ENCODE measurements at regions of chr22 and their contacts with region 1.

Region 1: DNA sequence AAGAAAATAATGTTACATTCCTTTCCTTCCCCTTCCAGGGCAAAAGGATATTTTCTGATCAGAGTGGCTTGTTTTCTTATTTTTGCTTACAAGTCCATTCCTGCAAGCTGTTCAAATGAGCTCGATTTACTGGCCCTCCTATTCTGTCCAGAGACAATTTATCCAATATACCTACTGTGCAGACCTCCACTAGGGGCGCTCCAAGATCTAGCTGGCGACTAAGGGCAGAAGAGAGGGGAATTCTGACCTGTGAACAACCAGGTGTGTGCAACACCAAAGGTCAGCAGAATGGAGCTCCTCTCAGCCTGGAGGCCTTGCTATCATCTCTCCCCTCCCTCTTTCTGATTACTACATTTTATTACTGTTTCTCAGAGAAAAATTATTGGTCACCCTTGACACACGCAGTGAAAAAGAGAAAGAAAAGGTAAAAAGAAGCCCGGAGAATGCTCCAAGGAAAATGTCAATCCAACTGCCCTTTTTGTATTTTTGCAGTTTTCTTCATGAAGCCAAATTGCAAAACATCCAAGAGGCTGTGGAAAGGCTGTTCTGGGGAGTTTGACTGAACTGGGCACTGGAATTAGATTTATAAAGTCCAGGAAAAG is 3.2 kb downstream of the SEZ6L start:
- DNase-seq: peak in 1 of 2 experiments; percentile 72
- H3K4me3 ChIP-seq: no peak overlapping the region
- H3K27ac ChIP-seq: no peak overlapping the region
- H3K4me1 ChIP-seq: peaks cover 4 to 21% (median 10%) of the 10 kb centered on the region in 4 experiments
- H3K27me3 ChIP-seq: peaks cover 19 to 40% (median 36%) of the 10 kb centered on the region in 4 experiments
- CTCF ChIP-seq: peak; percentile 53 to 86 (median 79)
- EP300 ChIP-seq: no peak
- POLR2A ChIP-seq: no peak
- RAD21 ChIP-seq: peak; percentile 74 to 83

Region 2: DNA sequence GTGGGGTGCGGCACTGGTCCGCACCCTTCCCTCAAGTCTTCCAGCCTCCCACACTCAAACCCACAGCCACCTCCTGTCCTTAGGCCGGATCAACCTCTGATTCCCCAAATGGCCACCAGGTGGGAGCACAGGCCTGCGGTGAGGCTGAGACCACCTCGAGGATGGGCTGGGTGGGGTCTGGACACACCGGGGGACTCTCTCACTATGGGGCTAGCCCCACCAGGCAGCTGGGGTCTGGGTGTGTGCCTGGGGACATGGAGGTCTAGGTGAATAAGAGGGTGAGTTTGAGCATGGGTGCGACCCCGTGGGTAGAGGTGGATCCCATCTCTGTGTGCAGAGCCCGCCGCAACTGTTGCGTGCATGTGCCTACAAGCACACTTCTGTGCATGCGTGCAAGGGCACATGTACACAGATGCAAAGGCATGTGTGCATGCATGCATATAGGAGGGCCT is 397.9 kb before region 1 on chr22:
- CTCF ChIA-PET with region 1: interaction called, 14 read pairs
- POLR2A ChIA-PET with region 1: no interaction called
- DNase-seq: peak in 1 of 2 experiments; percentile 86
- H3K4me3 ChIP-seq: no peak overlapping the region
- H3K27ac ChIP-seq: no peak overlapping the region
- H3K4me1 ChIP-seq: no peaks in the 10 kb centered on the region
- H3K27me3 ChIP-seq: no peaks in the 10 kb centered on the region
- CTCF ChIP-seq: peak; percentile 90 to 93 (median 90)
- EP300 ChIP-seq: no peak
- POLR2A ChIP-seq: no peak
- RAD21 ChIP-seq: peak; percentile 97

Region 3: GRCh38 chr22:26115266-26115665 is 57.2 kb before region 1 on chr22:
- CTCF ChIA-PET with region 1: no interaction called
- POLR2A ChIA-PET with region 1: no interaction called
- DNase-seq: no peak
- H3K4me3 ChIP-seq: no peak overlapping the region
- H3K27ac ChIP-seq: no peak overlapping the region
- H3K4me1 ChIP-seq: no peaks in the 10 kb centered on the region
- H3K27me3 ChIP-seq: no peaks in the 10 kb centered on the region
- CTCF ChIP-seq: no peak
- EP300 ChIP-seq: no peak
- POLR2A ChIP-seq: no peak
- RAD21 ChIP-seq: no peak

Region 4: GRCh38 chr22:26134654-26135330 is 37.7 kb before region 1 on chr22:
- CTCF ChIA-PET with region 1: interaction called, 16 read pairs
- POLR2A ChIA-PET with region 1: no interaction called
- DNase-seq: peak in 1 of 2 experiments; percentile 58
- H3K4me3 ChIP-seq: no peak overlapping the region
- H3K27ac ChIP-seq: no peak overlapping the region
- H3K4me1 ChIP-seq: peaks cover 3 to 8% (median 5%) of the 10 kb centered on the region in 4 experiments; a peak in 5 of 7 replicates
- H3K27me3 ChIP-seq: no peaks in the 10 kb centered on the region
- CTCF ChIP-seq: peak; percentile 28 to 65 (median 57)
- EP300 ChIP-seq: no peak
- POLR2A ChIP-seq: no peak
- RAD21 ChIP-seq: peak; percentile 68 to 71

Region 5: GRCh38 chr22:26182723-26183122 is 10.2 kb after region 1 on chr22:
- CTCF ChIA-PET with region 1: interaction called, 30 read pairs
- POLR2A ChIA-PET with region 1: no interaction called
- DNase-seq: no peak
- H3K4me3 ChIP-seq: no peak overlapping the region
- H3K27ac ChIP-seq: no peak overlapping the region
- H3K4me1 ChIP-seq: no peaks in the 10 kb centered on the region
- H3K27me3 ChIP-seq: 0 out of 7 replicates have a peak, but pooled peaks cover 0 to 2% (median 0%) of the 10 kb centered on the region in 4 experiments
- CTCF ChIP-seq: no peak
- EP300 ChIP-seq: no peak
- POLR2A ChIP-seq: no peak
- RAD21 ChIP-seq: no peak

Region 6: DNA sequence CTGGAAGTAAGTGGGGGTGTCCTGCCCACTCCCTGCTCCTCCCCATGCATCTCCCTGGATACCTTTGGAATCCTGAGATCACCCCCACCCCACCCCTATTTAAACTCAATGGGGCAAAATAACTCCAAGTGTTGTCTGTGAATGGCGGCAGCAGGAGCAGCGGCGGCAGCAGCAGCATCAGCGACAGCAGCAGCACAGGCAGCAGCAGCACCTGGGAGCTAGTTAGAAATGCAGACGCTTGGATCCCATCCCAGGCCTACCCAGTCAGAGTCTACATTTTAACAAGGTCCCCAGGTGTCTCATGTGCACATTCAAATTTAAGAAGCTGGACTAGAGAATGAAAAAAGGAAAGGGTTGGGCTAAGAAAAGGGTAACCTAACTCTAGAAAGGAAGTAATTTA is 79.4 kb after region 1 on chr22:
- CTCF ChIA-PET with region 1: interaction called, 12 read pairs
- POLR2A ChIA-PET with region 1: no interaction called
- DNase-seq: no peak
- H3K4me3 ChIP-seq: no peak overlapping the region
- H3K27ac ChIP-seq: no peak overlapping the region
- H3K4me1 ChIP-seq: no peaks in the 10 kb centered on the region; a peak in 1 of 7 replicates
- H3K27me3 ChIP-seq: no peaks in the 10 kb centered on the region
- CTCF ChIP-seq: no peak
- EP300 ChIP-seq: no peak
- POLR2A ChIP-seq: no peak
- RAD21 ChIP-seq: no peak

Region 7: DNA sequence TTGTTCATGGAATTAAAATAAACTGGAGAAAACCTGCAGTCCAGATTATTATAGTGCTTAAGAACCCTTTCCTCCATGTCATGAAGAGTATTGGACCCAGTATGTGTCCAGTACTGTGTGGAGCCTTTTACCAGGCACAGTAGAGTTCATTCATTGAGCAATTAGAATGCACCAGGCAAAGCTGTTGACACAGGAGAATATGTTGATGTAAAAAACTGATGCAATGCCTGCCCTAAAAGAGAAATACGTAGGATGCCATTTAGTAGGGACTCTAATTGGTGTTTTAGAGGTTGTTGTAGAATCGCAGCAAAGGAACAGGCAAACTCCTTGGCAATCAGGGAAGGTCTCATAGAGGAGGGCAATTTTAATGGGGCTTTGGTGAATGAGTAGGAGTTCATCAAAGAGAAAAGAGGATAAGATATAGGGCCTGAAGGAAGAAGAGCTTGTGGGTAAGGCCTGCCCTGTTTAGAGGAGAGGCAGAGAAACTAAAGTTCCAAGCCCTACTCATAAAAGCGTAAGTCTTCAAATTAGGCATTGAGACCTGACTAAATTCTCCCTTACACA is 123.2 kb after region 1 on chr22:
- CTCF ChIA-PET with region 1: interaction called, 21 read pairs
- POLR2A ChIA-PET with region 1: no interaction called
- DNase-seq: no peak
- H3K4me3 ChIP-seq: no peak overlapping the region
- H3K27ac ChIP-seq: no peak overlapping the region
- H3K4me1 ChIP-seq: peaks cover 7 to 13% (median 10%) of the 10 kb centered on the region in 4 experiments; a peak in 4 of 7 replicates
- H3K27me3 ChIP-seq: no peaks in the 10 kb centered on the region; a peak in 1 of 7 replicates
- CTCF ChIP-seq: no peak
- EP300 ChIP-seq: no peak
- POLR2A ChIP-seq: no peak
- RAD21 ChIP-seq: no peak

Region 8: GRCh38 chr22:26357813-26358212 is 185.3 kb after region 1 on chr22:
- CTCF ChIA-PET with region 1: interaction called, 13 read pairs
- POLR2A ChIA-PET with region 1: no interaction called
- DNase-seq: no peak
- H3K4me3 ChIP-seq: no peak overlapping the region
- H3K27ac ChIP-seq: no peak overlapping the region
- H3K4me1 ChIP-seq: peaks cover 0 to 4% (median under 1%) of the 10 kb centered on the region in 4 experiments; a peak in 2 of 7 replicates
- H3K27me3 ChIP-seq: no peaks in the 10 kb centered on the region; a peak in 2 of 7 replicates
- CTCF ChIP-seq: no peak
- EP300 ChIP-seq: no peak
- POLR2A ChIP-seq: no peak
- RAD21 ChIP-seq: no peak